Dendritic cell treated with granulocyte-macrophage colony-stimulating factor and Interleukin-4, amounts not matched to agents 40 ng/mL and 50 ng/mL, for 4 days (primary cell): ENCODE measurements at regions of chr5 and their contacts with region 1.

Region 1: GRCh38 chr5:69189162-69190086 is at the start of gene CENPH:
- H3K4me3 Mint-ChIP-seq: peak within 1 kb of the TSS; percentile 91
- H3K27ac Mint-ChIP-seq: peak within 1 kb of the TSS; percentile 92
- H3K4me1 Mint-ChIP-seq: peaks cover 9% of the 10 kb centered on the region
- H3K27me3 Mint-ChIP-seq: no peaks in the 10 kb centered on the region

Region 2: GRCh38 chr5:68862560-68862959 is 326.9 kb before region 1 on chr5:
- intact Hi-C with region 1: no loop called
- H3K4me3 Mint-ChIP-seq: no peak overlapping the region
- H3K27ac Mint-ChIP-seq: no peak overlapping the region
- H3K4me1 Mint-ChIP-seq: no peaks in the 10 kb centered on the region
- H3K27me3 Mint-ChIP-seq: no peaks in the 10 kb centered on the region

Region 3: GRCh38 chr5:69093771-69094482 is 95.5 kb before region 1 on chr5 and contains the start of gene SLC30A5:
- intact Hi-C with region 1: loop called (anchors 1 kb)
- H3K4me3 Mint-ChIP-seq: peak within 1 kb of the TSS; percentile 91
- H3K27ac Mint-ChIP-seq: peak within 1 kb of the TSS; percentile 95
- H3K4me1 Mint-ChIP-seq: peaks cover 33% of the 10 kb centered on the region
- H3K27me3 Mint-ChIP-seq: no peaks in the 10 kb centered on the region

Region 4: GRCh38 chr5:69234457-69235268 is 45.2 kb after region 1 on chr5 and contains the start of gene CDK7:
- intact Hi-C with region 1: loop called (anchors 1 kb)
- H3K4me3 Mint-ChIP-seq: peak within 1 kb of the TSS; percentile 91
- H3K27ac Mint-ChIP-seq: peak within 1 kb of the TSS; percentile 88
- H3K4me1 Mint-ChIP-seq: peaks cover 32% of the 10 kb centered on the region
- H3K27me3 Mint-ChIP-seq: no peaks in the 10 kb centered on the region

Region 5: GRCh38 chr5:69374911-69375446 is 185.6 kb after region 1 on chr5:
- intact Hi-C with region 1: no loop called
- H3K4me3 Mint-ChIP-seq: no peak overlapping the region
- H3K27ac Mint-ChIP-seq: no peak overlapping the region
- H3K4me1 Mint-ChIP-seq: no peaks in the 10 kb centered on the region
- H3K27me3 Mint-ChIP-seq: no peaks in the 10 kb centered on the region